Endothelial cell of umbilical vein (primary cell): ENCODE measurements at regions of chr19 and their contacts with region 1.

Region 1: GRCh38 chr19:45643024-45643926 is 4.1 kb upstream of the EML2 start:
- DNase-seq: peak; percentile 85
- H3K4me3 ChIP-seq: peak overlapping the region in 1 of 3 experiments; percentile 13
- H3K27ac ChIP-seq: peak overlapping the region; percentile 9
- H3K4me1 ChIP-seq: peaks cover 42% of the 10 kb centered on the region
- H3K27me3 ChIP-seq: no peaks in the 10 kb centered on the region
- CTCF ChIP-seq: peak; percentile 98 to 99
- POLR2A ChIP-seq: no peak

Region 2: GRCh38 chr19:45400192-45400591 is 243.1 kb before region 1 on chr19:
- CTCF ChIA-PET with region 1: no interaction called
- POLR2A ChIA-PET with region 1: no interaction called
- dilution Hi-C with region 1: no loop called
- intact Hi-C with region 1: no loop called
- DNase-seq: no peak
- H3K4me3 ChIP-seq: no peak overlapping the region
- H3K27ac ChIP-seq: no peak overlapping the region
- H3K4me1 ChIP-seq: peaks cover 25% of the 10 kb centered on the region
- H3K27me3 ChIP-seq: no peaks in the 10 kb centered on the region
- CTCF ChIP-seq: no peak
- POLR2A ChIP-seq: no peak

Region 3: GRCh38 chr19:45485305-45486077 is 157.8 kb before region 1 on chr19:
- CTCF ChIA-PET with region 1: interaction called, 30 read pairs
- POLR2A ChIA-PET with region 1: no interaction called
- dilution Hi-C with region 1: no loop called
- intact Hi-C with region 1: no loop called
- DNase-seq: peak; percentile 85
- H3K4me3 ChIP-seq: peak overlapping the region; percentile 56 to 66 (median 61)
- H3K27ac ChIP-seq: peak overlapping the region; percentile 19
- H3K4me1 ChIP-seq: no peaks in the 10 kb centered on the region
- H3K27me3 ChIP-seq: no peaks in the 10 kb centered on the region
- CTCF ChIP-seq: peak; percentile 79 to 96
- POLR2A ChIP-seq: no peak

Region 4: DNA sequence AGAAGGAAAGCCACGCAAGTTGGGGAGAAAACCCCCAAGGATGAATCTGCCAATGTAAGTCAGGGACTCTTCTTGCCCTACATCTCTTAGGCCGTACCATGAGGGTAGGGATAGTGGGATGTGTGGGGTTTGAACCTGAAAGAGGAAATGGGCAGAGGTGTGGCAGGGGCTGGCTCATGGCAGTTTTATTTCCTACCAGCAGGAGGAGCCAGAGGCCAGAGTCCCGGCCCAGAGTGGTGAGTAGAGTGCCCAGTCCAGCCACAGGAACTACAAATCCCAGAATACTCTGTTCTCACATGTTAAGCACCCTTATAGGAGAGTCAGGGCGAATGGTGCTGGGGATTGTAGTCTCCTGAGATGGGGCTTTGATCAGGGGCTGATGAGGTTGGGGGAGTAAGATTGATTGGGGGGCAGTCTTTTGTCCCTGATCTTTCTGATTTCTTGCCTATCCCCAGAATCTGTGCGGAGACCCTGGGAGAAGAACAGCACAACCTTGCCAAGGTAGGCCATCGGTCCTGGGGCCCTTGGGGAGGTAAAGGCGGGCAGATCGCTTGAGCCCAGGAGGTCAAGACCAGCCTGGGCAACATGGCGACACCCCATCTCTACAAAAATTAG is 119.5 kb before region 1 on chr19:
- CTCF ChIA-PET with region 1: interaction called, 13 read pairs
- POLR2A ChIA-PET with region 1: interaction called, 4 read pairs
- dilution Hi-C with region 1: no loop called
- intact Hi-C with region 1: loop called (anchors 1 kb)
- DNase-seq: peak; percentile 86
- H3K4me3 ChIP-seq: no peak overlapping the region
- H3K27ac ChIP-seq: no peak overlapping the region
- H3K4me1 ChIP-seq: no peaks in the 10 kb centered on the region
- H3K27me3 ChIP-seq: no peaks in the 10 kb centered on the region
- CTCF ChIP-seq: peak; percentile 82 to 92
- POLR2A ChIP-seq: peak; percentile 46

Region 5: GRCh38 chr19:45591004-45591637 is 52.2 kb before region 1 on chr19:
- CTCF ChIA-PET with region 1: interaction called, 41 read pairs
- POLR2A ChIA-PET with region 1: no interaction called
- dilution Hi-C with region 1: no loop called
- intact Hi-C with region 1: no loop called
- DNase-seq: no peak
- H3K4me3 ChIP-seq: no peak overlapping the region
- H3K27ac ChIP-seq: no peak overlapping the region
- H3K4me1 ChIP-seq: peaks cover 20% of the 10 kb centered on the region
- H3K27me3 ChIP-seq: no peaks in the 10 kb centered on the region
- CTCF ChIP-seq: peak; percentile 14 to 42
- POLR2A ChIP-seq: no peak

Region 6: GRCh38 chr19:45621389-45621788 is 21.9 kb before region 1 on chr19:
- CTCF ChIA-PET with region 1: interaction called, 91 read pairs
- POLR2A ChIA-PET with region 1: interaction called, 5 read pairs
- dilution Hi-C with region 1: no loop called
- intact Hi-C with region 1: no loop called
- DNase-seq: no peak
- H3K4me3 ChIP-seq: no peak overlapping the region
- H3K27ac ChIP-seq: no peak overlapping the region
- H3K4me1 ChIP-seq: no peaks in the 10 kb centered on the region
- H3K27me3 ChIP-seq: no peaks in the 10 kb centered on the region
- CTCF ChIP-seq: no peak
- POLR2A ChIP-seq: no peak

Region 7: GRCh38 chr19:45730389-45731288 is 87.4 kb after region 1 on chr19 and contains the start of gene FBXO46:
- CTCF ChIA-PET with region 1: no interaction called
- POLR2A ChIA-PET with region 1: no interaction called
- dilution Hi-C with region 1: no loop called
- intact Hi-C with region 1: loop called (anchors 1 kb)
- DNase-seq: peak; percentile 99
- H3K4me3 ChIP-seq: peak within 1 kb of the TSS; percentile 81 to 83 (median 82)
- H3K27ac ChIP-seq: peak within 1 kb of the TSS; percentile 28
- H3K4me1 ChIP-seq: peaks cover 6% of the 10 kb centered on the region
- H3K27me3 ChIP-seq: no peaks in the 10 kb centered on the region
- CTCF ChIP-seq: peak in 1 of 2 donors; percentile 36
- POLR2A ChIP-seq: peak; percentile 30
- total RNA-seq, gene FBXO46: 18.3 and 21.2 TPM in 2 replicates